Tibial artery (tissue), 4 donors: ENCODE measurements at regions of chr9 and their contacts with region 1.

Region 1: DNA sequence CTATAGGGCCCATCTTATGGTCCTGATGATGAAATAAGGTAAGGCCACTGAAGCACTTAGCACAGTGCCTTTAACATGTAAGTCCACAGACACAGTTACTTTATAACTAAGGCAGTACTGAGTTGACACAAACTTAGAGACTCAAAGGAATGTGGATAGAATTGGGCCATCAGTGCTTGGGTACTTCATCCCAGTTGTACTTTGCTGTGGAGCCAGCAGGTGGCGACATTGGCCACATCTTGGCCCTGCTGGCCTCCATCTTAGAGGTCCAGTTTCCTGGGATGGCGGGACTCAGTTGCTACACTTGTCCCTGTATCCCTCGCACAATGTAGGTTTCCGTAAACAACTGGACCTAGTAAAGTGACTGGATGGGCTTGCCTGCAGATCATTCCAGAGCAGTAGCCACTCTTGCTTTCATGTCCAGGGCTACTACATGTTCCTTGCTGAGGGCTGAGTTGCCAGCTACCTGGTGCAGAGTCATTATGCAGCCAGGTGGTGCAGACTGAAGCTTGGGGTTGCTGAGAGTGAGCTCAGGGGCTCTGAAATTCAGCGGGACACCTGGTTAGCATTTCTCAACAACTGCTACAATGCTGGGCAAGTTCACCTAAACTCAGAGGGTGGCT is 10.6 kb downstream of the MTAP start:
- DNase-seq: peak; percentile 54 to 79
- H3K4me3 ChIP-seq: no peak overlapping the region
- H3K27ac ChIP-seq: peak overlapping the region in 1 of 2 donors; percentile 16
- H3K4me1 ChIP-seq: peaks cover 0 to 8% (median 3%) of the 10 kb centered on the region in 4 donors
- H3K27me3 ChIP-seq: no peaks in the 10 kb centered on the region
- CTCF ChIP-seq: peak; percentile 72 to 76

Region 2: GRCh38 chr9:22008736-22009562 is 195.9 kb after region 1 on chr9 and contains the start of gene CDKN2B:
- intact Hi-C with region 1: loop called (anchors 5 kb)
- DNase-seq: peak; percentile 91 to 99
- H3K4me3 ChIP-seq: peak within 1 kb of the TSS; percentile 88 to 92
- H3K27ac ChIP-seq: peak within 1 kb of the TSS; percentile 89 to 96
- H3K4me1 ChIP-seq: peaks cover 0 to 14% (median 3%) of the 10 kb centered on the region in 4 donors
- H3K27me3 ChIP-seq: peaks cover 0 to 9% of the 10 kb centered on the region in 2 donors
- CTCF ChIP-seq: peak; percentile 85 to 90

Region 3: GRCh38 chr9:22119537-22120158 is 306.6 kb after region 1 on chr9:
- intact Hi-C with region 1: loop called (anchors 5 kb)
- DNase-seq: no peak
- H3K4me3 ChIP-seq: no peak overlapping the region
- H3K27ac ChIP-seq: no peak overlapping the region
- H3K4me1 ChIP-seq: no peaks in the 10 kb centered on the region
- H3K27me3 ChIP-seq: no peaks in the 10 kb centered on the region
- CTCF ChIP-seq: peak; percentile 22 to 46

Region 4: GRCh38 chr9:22244141-22245011 is 431.3 kb after region 1 on chr9:
- intact Hi-C with region 1: loop called (anchors 10 kb)
- DNase-seq: no peak
- H3K4me3 ChIP-seq: no peak overlapping the region
- H3K27ac ChIP-seq: no peak overlapping the region
- H3K4me1 ChIP-seq: no peaks in the 10 kb centered on the region
- H3K27me3 ChIP-seq: no peaks in the 10 kb centered on the region
- CTCF ChIP-seq: peak; percentile 25 to 34

Region 5: GRCh38 chr9:22452415-22453010 is 639.5 kb after region 1 on chr9:
- intact Hi-C with region 1: loop called (anchors 5 kb)
- DNase-seq: peak in 1 of 2 donors; percentile 51
- H3K4me3 ChIP-seq: no peak overlapping the region
- H3K27ac ChIP-seq: no peak overlapping the region
- H3K4me1 ChIP-seq: peaks cover 0 to 9% (median 1%) of the 10 kb centered on the region in 4 donors
- H3K27me3 ChIP-seq: no peaks in the 10 kb centered on the region
- CTCF ChIP-seq: peak; percentile 68 to 70